Mucosa of descending colon (tissue), 3 donors: ENCODE measurements at regions of chr20 and their contacts with region 1.

Region 1: GRCh38 chr20:39264506-39265172 is 302.5 kb downstream of the DHX35 start:
- DNase-seq: peak in 2 of 3 donors; percentile 51 to 54
- ATAC-seq: peak; percentile 75
- H3K4me3 ChIP-seq: no peak overlapping the region
- H3K4me1 ChIP-seq: no peaks in the 10 kb centered on the region
- CTCF ChIP-seq: peak; percentile 61

Region 2: DNA sequence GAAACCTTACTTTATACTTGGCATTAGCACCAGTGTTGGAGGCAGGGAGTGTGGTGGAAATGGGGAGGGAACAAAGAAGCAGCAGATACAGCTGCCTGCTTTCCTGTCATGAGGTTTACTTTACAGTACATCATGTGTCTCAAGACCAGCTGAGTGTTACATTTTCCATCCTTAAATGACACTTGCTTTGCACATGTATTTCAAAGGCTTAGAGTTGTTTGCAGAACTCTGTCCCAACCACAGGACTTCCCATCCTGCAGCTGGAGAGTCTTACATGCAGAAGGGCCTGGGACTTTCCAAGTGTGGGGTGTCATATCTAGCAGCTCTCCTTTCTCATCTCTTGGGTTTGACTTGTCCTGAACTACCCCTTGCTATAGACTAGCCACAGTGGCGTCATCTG is 93.4 kb after region 1 on chr20:
- intact Hi-C with region 1: no loop called
- DNase-seq: peak in 1 of 3 donors; percentile 24
- ATAC-seq: peak; percentile 42
- H3K4me3 ChIP-seq: no peak overlapping the region
- H3K4me1 ChIP-seq: no peaks in the 10 kb centered on the region
- CTCF ChIP-seq: no peak

Region 3: GRCh38 chr20:39516964-39517363 is 252.3 kb after region 1 on chr20:
- intact Hi-C with region 1: no loop called
- DNase-seq: no peak
- ATAC-seq: no peak
- H3K4me3 ChIP-seq: no peak overlapping the region
- H3K4me1 ChIP-seq: no peaks in the 10 kb centered on the region
- CTCF ChIP-seq: no peak

Region 4: GRCh38 chr20:39874049-39874888 is 609.6 kb after region 1 on chr20:
- intact Hi-C with region 1: loop called in 1 of 2 experiments (anchors 5 kb)
- DNase-seq: peak; percentile 44 to 88 (median 59)
- ATAC-seq: peak; percentile 86
- H3K4me3 ChIP-seq: no peak overlapping the region
- H3K4me1 ChIP-seq: no peaks in the 10 kb centered on the region
- CTCF ChIP-seq: peak; percentile 65

Region 5: GRCh38 chr20:40962730-40963504 is 1698.3 kb after region 1 on chr20:
- intact Hi-C with region 1: loop called in 1 of 2 experiments (anchors 10 kb)
- DNase-seq: peak; percentile 60 to 76 (median 68)
- ATAC-seq: peak; percentile 91
- H3K4me3 ChIP-seq: no peak overlapping the region
- H3K4me1 ChIP-seq: peaks cover 3% of the 10 kb centered on the region
- CTCF ChIP-seq: peak; percentile 83